Activated CD4-positive, alpha-beta T cell treated with anti-CD3 and anti-CD28 coated beads for 36 hours (primary cell): ENCODE measurements at regions of chr6 and their contacts with region 1.

Region 1: DNA sequence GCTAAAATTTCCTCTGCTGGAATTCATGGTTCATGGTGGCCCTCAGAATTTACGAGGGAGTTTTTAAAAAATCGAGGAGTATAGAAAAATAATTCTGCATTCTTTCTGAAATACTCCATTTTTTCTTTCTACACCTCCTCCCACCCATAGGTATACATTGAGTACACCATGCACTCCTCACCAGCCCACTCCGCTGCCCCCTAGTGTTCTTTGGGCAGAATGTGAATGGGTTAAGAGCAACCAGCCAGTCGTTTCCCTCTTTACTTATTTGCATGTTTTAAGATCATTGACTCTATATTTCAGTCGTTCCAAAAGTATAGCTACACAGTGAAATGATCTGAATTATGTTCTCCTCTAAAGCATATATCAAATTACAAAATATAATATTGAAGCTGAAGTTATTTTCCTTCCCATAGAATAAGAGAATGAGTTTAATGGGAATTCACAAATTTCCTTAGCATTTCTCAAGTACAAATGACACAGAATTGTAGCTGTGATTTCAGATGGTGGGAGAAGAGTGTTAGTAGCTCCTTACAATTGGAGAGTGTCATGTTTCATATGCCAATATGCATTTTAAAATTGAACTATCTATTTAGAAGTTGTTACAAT is 977.7 kb upstream of the SLC35B3 start:
- DNase-seq: peak; percentile 59
- ATAC-seq: peak; percentile 66
- H3K4me3 Mint-ChIP-seq: no peak overlapping the region
- H3K27ac Mint-ChIP-seq: no peak overlapping the region
- H3K4me1 Mint-ChIP-seq: no peaks in the 10 kb centered on the region
- H3K27me3 Mint-ChIP-seq: peaks cover 3% of the 10 kb centered on the region

Region 2: GRCh38 chr6:8131256-8131897 is 1281.7 kb before region 1 on chr6:
- CTCF ChIA-PET with region 1: no interaction called
- POLR2A ChIA-PET with region 1: no interaction called
- intact Hi-C with region 1: loop called in 1 of 2 experiments (anchors 10 kb)
- DNase-seq: peak; percentile 58
- ATAC-seq: peak; percentile 64
- H3K4me3 Mint-ChIP-seq: no peak overlapping the region
- H3K27ac Mint-ChIP-seq: no peak overlapping the region
- H3K4me1 Mint-ChIP-seq: no peaks in the 10 kb centered on the region
- H3K27me3 Mint-ChIP-seq: peaks cover 26% of the 10 kb centered on the region

Region 3: GRCh38 chr6:9250852-9251251 is 162.2 kb before region 1 on chr6:
- CTCF ChIA-PET with region 1: no interaction called
- POLR2A ChIA-PET with region 1: no interaction called
- intact Hi-C with region 1: loop called in 1 of 2 experiments (anchors 1 kb)
- DNase-seq: peak; percentile 14
- ATAC-seq: no peak
- H3K4me3 Mint-ChIP-seq: no peak overlapping the region
- H3K27ac Mint-ChIP-seq: no peak overlapping the region
- H3K4me1 Mint-ChIP-seq: no peaks in the 10 kb centered on the region
- H3K27me3 Mint-ChIP-seq: no peaks in the 10 kb centered on the region